CD4-positive, alpha-beta memory T cell (primary cell): ENCODE measurements at regions of chr9 and their contacts with region 1.

Region 1: GRCh38 chr9:37119907-37120842 is at the start of gene ZCCHC7:
- DNase-seq: peak; percentile 97 to 99 (median 98)
- H3K4me3 ChIP-seq: peak within 1 kb of the TSS; percentile 63 to 80
- H3K4me3 Mint-ChIP-seq: peak within 1 kb of the TSS; percentile 92 to 99 (median 97)
- H3K27ac ChIP-seq: peak within 1 kb of the TSS; percentile 96
- H3K27ac Mint-ChIP-seq: peak within 1 kb of the TSS; percentile 94 to 100 (median 99)
- H3K4me1 ChIP-seq: peaks cover 35% of the 10 kb centered on the region
- H3K4me1 Mint-ChIP-seq: peaks cover 18 to 48% (median 24%) of the 10 kb centered on the region in 4 donors
- H3K27me3 ChIP-seq: no peaks in the 10 kb centered on the region
- H3K27me3 Mint-ChIP-seq: no peaks in the 10 kb centered on the region
- total RNA-seq, gene ZCCHC7: 41.9 to 43.9 TPM

Region 2: GRCh38 chr9:37027582-37028419 is 92.4 kb before region 1 on chr9:
- CTCF ChIA-PET with region 1: no interaction called
- POLR2A ChIA-PET with region 1: no interaction called
- intact Hi-C with region 1: loop called (anchors 2 kb)
- DNase-seq: peak; percentile 78 to 85 (median 81)
- H3K4me3 ChIP-seq: peak overlapping the region in 1 of 2 donors; percentile 52
- H3K4me3 Mint-ChIP-seq: peak overlapping the region in 7 of 8 donors; percentile 40 to 69 (median 51)
- H3K27ac ChIP-seq: no peak overlapping the region
- H3K27ac Mint-ChIP-seq: peak overlapping the region in 2 of 7 donors; percentile 63 to 85
- H3K4me1 ChIP-seq: peaks cover 59% of the 10 kb centered on the region
- H3K4me1 Mint-ChIP-seq: peaks cover 16 to 55% (median 38%) of the 10 kb centered on the region in 4 donors
- H3K27me3 ChIP-seq: peaks cover 78% of the 10 kb centered on the region
- H3K27me3 Mint-ChIP-seq: peaks cover 62 to 73% of the 10 kb centered on the region in 2 donors

Region 3: GRCh38 chr9:37079370-37080164 is 40.6 kb before region 1 on chr9:
- CTCF ChIA-PET with region 1: interaction called, 8 read pairs
- POLR2A ChIA-PET with region 1: interaction called, 111 read pairs
- intact Hi-C with region 1: loop called (anchors 1 kb)
- DNase-seq: peak; percentile 92 to 97 (median 95)
- H3K4me3 ChIP-seq: peak overlapping the region; percentile 85 to 92
- H3K4me3 Mint-ChIP-seq: peak overlapping the region; percentile 89 to 98 (median 96)
- H3K27ac ChIP-seq: peak overlapping the region; percentile 98
- H3K27ac Mint-ChIP-seq: peak overlapping the region; percentile 95 to 99 (median 98)
- H3K4me1 ChIP-seq: peaks cover 48% of the 10 kb centered on the region
- H3K4me1 Mint-ChIP-seq: peaks cover 22 to 58% (median 44%) of the 10 kb centered on the region in 4 donors
- H3K27me3 ChIP-seq: no peaks in the 10 kb centered on the region
- H3K27me3 Mint-ChIP-seq: peaks cover 0 to 7% of the 10 kb centered on the region in 2 donors

Region 4: GRCh38 chr9:37107701-37108100 is 12.5 kb before region 1 on chr9:
- CTCF ChIA-PET with region 1: interaction called, 4 read pairs
- POLR2A ChIA-PET with region 1: interaction called, 19 read pairs
- intact Hi-C with region 1: no loop called
- DNase-seq: peak in 3 of 5 donors; percentile 8 to 18 (median 11)
- H3K4me3 ChIP-seq: peak overlapping the region; percentile 4 to 32
- H3K4me3 Mint-ChIP-seq: peak overlapping the region; percentile 64 to 86 (median 80)
- H3K27ac ChIP-seq: no peak overlapping the region
- H3K27ac Mint-ChIP-seq: peak overlapping the region in 6 of 7 donors; percentile 38 to 84 (median 74)
- H3K4me1 ChIP-seq: peaks cover 18% of the 10 kb centered on the region
- H3K4me1 Mint-ChIP-seq: peaks cover 14 to 25% (median 20%) of the 10 kb centered on the region in 4 donors
- H3K27me3 ChIP-seq: no peaks in the 10 kb centered on the region
- H3K27me3 Mint-ChIP-seq: peaks cover 3 to 5% of the 10 kb centered on the region in 2 donors

Region 5: DNA sequence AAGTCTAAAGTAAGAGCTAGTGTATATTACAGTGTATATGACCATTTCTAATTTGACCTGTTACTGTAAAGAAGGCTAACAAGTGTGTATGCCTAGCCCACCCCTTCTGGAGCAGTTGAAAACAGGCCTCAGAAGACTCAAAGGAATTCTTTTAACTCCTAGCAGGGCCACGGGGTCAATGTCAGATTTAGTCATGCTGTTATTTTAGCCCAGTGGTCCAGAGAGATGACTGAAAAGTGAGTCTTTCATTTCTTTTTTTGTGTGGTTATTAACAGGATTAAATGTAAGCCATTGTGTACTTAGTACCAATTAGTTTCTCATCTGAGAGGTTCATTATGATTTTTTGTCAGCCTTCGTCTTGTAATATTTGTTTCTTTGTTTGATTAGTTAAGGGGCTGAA is 24.6 kb after region 1 on chr9:
- CTCF ChIA-PET with region 1: interaction called, 8 read pairs
- POLR2A ChIA-PET with region 1: interaction called, 63 read pairs
- intact Hi-C with region 1: loop called (anchors 1 kb)
- DNase-seq: no peak
- H3K4me3 ChIP-seq: no peak overlapping the region
- H3K4me3 Mint-ChIP-seq: peak overlapping the region in 3 of 8 donors; percentile 28 to 66 (median 36)
- H3K27ac ChIP-seq: no peak overlapping the region
- H3K27ac Mint-ChIP-seq: peak overlapping the region; percentile 58 to 90 (median 78)
- H3K4me1 ChIP-seq: peaks cover 50% of the 10 kb centered on the region
- H3K4me1 Mint-ChIP-seq: peaks cover 29 to 48% (median 40%) of the 10 kb centered on the region in 4 donors
- H3K27me3 ChIP-seq: no peaks in the 10 kb centered on the region
- H3K27me3 Mint-ChIP-seq: no peaks in the 10 kb centered on the region

Region 6: DNA sequence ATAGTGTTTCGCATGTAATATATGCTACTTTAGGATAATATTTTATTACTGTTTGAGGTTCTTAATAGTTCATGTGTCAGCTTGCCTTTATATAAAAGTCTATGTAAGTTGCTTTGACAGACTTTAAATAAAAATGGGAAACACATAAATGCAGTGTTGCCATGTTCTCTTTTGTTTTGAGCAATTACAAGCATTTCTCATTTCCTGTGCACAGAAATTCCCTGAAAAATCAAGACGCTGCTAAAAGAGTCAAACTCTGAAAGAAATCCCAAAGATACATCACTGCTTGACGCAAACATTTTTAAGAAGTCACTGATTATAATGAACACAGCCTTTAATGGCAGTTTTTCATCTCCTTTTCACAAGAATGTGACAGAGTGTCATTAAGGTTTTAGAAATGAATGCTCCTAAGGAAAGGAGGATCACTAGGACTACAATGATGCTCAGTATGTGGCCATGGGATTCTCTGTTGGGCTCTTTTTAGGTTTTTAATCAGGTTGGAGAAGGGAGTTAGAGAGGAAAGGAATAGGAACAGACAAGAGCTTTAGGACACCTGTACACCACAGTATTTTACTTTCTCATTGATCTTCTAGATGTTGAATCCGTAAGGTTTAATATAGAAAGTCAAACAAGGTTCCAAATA is 29.6 kb after region 1 on chr9:
- CTCF ChIA-PET with region 1: interaction called, 8 read pairs
- POLR2A ChIA-PET with region 1: interaction called, 63 read pairs
- intact Hi-C with region 1: loop called (anchors 1 kb)
- DNase-seq: no peak
- H3K4me3 ChIP-seq: no peak overlapping the region
- H3K4me3 Mint-ChIP-seq: no peak overlapping the region
- H3K27ac ChIP-seq: no peak overlapping the region
- H3K27ac Mint-ChIP-seq: peak overlapping the region in 1 of 7 donors; percentile 1
- H3K4me1 ChIP-seq: peaks cover 34% of the 10 kb centered on the region
- H3K4me1 Mint-ChIP-seq: peaks cover 25 to 43% (median 34%) of the 10 kb centered on the region in 4 donors
- H3K27me3 ChIP-seq: no peaks in the 10 kb centered on the region
- H3K27me3 Mint-ChIP-seq: no peaks in the 10 kb centered on the region

Region 7: GRCh38 chr9:37251452-37251851 is 131.3 kb after region 1 on chr9:
- CTCF ChIA-PET with region 1: no interaction called
- POLR2A ChIA-PET with region 1: no interaction called
- intact Hi-C with region 1: no loop called
- DNase-seq: no peak
- H3K4me3 ChIP-seq: no peak overlapping the region
- H3K4me3 Mint-ChIP-seq: no peak overlapping the region
- H3K27ac ChIP-seq: no peak overlapping the region
- H3K27ac Mint-ChIP-seq: peak overlapping the region in 1 of 7 donors; percentile 2
- H3K4me1 ChIP-seq: no peaks in the 10 kb centered on the region
- H3K4me1 Mint-ChIP-seq: peaks cover 0 to 5% (median 2%) of the 10 kb centered on the region in 4 donors
- H3K27me3 ChIP-seq: no peaks in the 10 kb centered on the region
- H3K27me3 Mint-ChIP-seq: no peaks in the 10 kb centered on the region

Region 8: DNA sequence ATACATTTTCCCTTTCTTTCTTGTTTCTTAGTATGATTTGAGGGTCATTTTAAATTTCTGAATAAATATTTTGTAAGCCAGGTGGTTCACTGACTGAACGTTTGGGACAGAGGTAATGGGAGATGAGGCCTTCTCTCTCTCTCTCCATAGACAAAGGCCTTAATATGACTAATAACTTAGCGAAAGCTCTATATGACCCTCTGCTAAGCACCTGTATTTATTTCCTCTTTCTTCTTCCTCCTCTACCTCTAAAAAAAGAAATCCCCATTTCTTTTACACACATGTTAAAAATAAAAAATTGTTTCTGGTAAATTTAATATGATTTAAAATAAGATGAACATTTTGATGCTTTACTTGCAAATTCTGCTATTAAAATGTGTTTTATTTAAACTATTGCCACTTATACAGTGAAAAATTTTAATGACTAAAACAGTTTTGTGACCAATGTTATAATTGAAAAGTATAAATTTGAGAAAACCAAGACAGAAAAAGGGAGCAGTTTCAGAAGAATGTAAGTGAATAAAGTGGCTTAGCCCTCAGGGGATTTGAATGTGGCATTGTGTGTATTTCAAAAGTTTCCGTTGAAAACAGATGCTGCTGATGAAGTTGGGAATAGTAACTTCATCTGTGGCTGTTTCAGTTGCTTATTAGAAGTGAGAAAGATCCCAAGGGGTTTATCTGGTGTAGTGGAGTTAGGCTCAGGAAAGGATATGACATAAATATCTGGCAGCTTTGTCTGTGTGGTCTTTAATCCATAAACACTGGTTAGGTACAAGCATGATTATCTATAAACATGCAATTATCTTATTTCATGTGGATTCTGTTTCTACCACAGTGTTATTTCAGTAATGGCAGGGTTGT is 173.7 kb after region 1 on chr9:
- CTCF ChIA-PET with region 1: no interaction called
- POLR2A ChIA-PET with region 1: no interaction called
- intact Hi-C with region 1: loop called (anchors 10 kb)
- DNase-seq: no peak
- H3K4me3 ChIP-seq: no peak overlapping the region
- H3K4me3 Mint-ChIP-seq: peak overlapping the region in 1 of 8 donors; percentile 2
- H3K27ac ChIP-seq: no peak overlapping the region
- H3K27ac Mint-ChIP-seq: peak overlapping the region in 1 of 7 donors; percentile 8
- H3K4me1 ChIP-seq: peaks cover 33% of the 10 kb centered on the region
- H3K4me1 Mint-ChIP-seq: peaks cover 34 to 54% (median 36%) of the 10 kb centered on the region in 4 donors
- H3K27me3 ChIP-seq: no peaks in the 10 kb centered on the region
- H3K27me3 Mint-ChIP-seq: no peaks in the 10 kb centered on the region